ENCODE measurements at regions of chr12 and their contacts with region 1.

Region 1: GRCh38 chr12:84016956-84017355 is 895.6 kb downstream of the SLC6A15 start:
- DNase-seq: no peak
- H3K4me3 ChIP-seq: no peak overlapping the region
- H3K27ac ChIP-seq: no peak overlapping the region
- H3K4me1 ChIP-seq: no peaks in the 10 kb centered on the region
- H3K27me3 ChIP-seq: no peaks in the 10 kb centered on the region
- CTCF ChIP-seq: no peak

Region 2: GRCh38 chr12:84038242-84038641 is 21.3 kb after region 1 on chr12:
- intact Hi-C with region 1: no loop called
- DNase-seq: no peak
- H3K4me3 ChIP-seq: no peak overlapping the region
- H3K27ac ChIP-seq: no peak overlapping the region
- H3K4me1 ChIP-seq: no peaks in the 10 kb centered on the region
- H3K27me3 ChIP-seq: no peaks in the 10 kb centered on the region
- CTCF ChIP-seq: no peak

Region 3: DNA sequence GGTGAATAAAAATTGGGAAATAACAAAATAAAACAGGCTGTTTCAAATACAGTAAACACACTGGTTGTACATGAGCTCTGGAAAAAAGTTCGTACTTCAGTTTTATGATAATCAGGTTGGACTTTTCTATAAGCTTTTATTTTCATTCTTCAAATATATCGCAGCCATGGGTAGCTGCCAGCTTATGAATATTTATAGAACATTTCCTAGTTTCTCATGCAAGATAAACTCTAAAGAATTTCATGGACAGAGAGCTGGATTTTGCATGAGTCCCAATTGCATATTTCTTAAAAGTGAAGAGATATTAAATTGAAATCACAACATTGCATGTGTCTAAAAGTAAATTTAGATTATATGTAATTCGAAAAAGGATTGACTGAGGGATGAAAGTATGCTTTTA is 68.1 kb after region 1 on chr12:
- intact Hi-C with region 1: loop called (anchors 2 kb)
- DNase-seq: no peak
- H3K4me3 ChIP-seq: no peak overlapping the region
- H3K27ac ChIP-seq: no peak overlapping the region
- H3K4me1 ChIP-seq: no peaks in the 10 kb centered on the region
- H3K27me3 ChIP-seq: no peaks in the 10 kb centered on the region
- CTCF ChIP-seq: no peak

Measured in tibial artery (tissue), 4 donors.